ENCODE measurements at regions of chr6 and their contacts with region 1.

Region 1: DNA sequence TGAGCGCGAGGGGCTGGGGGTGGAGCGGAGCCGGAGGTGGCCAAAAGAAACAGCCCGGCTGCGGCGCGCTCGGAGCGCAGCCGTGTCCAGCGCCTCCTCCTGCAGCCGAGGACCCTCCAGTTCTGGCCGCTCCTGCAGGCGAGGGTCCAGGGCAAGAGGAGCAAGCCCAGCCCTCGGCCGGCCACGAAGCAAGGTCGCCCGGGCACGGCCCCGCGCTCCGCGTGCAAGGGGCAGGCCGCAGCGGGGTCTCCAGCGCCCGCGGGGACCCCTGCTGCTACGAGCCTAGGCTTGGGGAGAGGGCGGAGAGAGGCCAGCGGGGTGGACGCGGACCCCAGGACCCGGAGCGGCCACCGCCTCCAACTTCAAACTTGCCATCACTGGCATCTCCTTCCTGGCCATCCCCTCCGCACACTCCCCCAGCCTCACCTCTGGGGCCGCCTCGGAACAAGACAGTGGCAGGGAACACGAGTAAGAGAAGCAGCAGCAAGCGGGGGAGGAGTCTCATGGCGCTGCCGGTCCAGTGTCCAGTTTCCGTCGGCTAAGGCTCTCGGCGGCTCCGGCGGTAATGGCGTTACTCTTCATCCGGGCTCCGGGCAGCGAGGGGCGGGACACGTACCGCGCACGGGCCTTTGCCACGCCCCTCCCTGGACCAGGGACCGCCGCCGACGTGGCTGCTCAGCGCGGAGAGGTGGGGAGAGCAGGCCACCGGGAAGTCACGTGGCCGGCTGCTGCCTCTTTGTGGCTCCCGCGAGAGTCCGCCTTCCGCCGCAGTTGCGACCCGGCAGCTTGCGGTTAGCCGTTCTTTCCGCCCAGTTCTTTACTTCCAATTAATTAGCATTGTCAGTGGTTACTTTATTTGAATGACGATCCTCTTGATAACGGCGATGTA is at the start of gene SSR1:
- DNase-seq: peak; percentile 95
- ATAC-seq: peak; percentile 93
- H3K4me3 ChIP-seq: peak within 1 kb of the TSS; percentile 85 to 98 (median 97)
- H3K27ac ChIP-seq: peak within 1 kb of the TSS; percentile 91
- H3K4me1 ChIP-seq: peaks cover 69% of the 10 kb centered on the region
- H3K27me3 ChIP-seq: no peaks in the 10 kb centered on the region; a peak in 1 of 5 replicates
- CTCF ChIP-seq: no peak
- EP300 ChIP-seq: peak in 1 of 2 experiments; percentile 67; a peak in 2 of 4 replicates
- POLR2A ChIP-seq: peak; percentile 97 to 98
- RAD21 ChIP-seq: peak; percentile 54
- total RNA-seq, gene SSR1: 208 and 243 TPM in 2 replicates

Region 2: GRCh38 chr6:7042056-7042653 is 270.7 kb before region 1 on chr6:
- CTCF ChIA-PET with region 1: no interaction called
- POLR2A ChIA-PET with region 1: no interaction called
- in situ Hi-C with region 1: no loop called
- intact Hi-C with region 1: no loop called
- DNase-seq: peak; percentile 46
- ATAC-seq: peak; percentile 72
- H3K4me3 ChIP-seq: peak overlapping the region; percentile 17 to 58 (median 39)
- H3K27ac ChIP-seq: peak overlapping the region; percentile 81
- H3K4me1 ChIP-seq: peaks cover 25% of the 10 kb centered on the region
- H3K27me3 ChIP-seq: peaks cover 0 to 2% of the 10 kb centered on the region in 2 experiments; a peak in 1 of 5 replicates
- CTCF ChIP-seq: peak; percentile 16; the same call in 1 of the 2 replicates
- EP300 ChIP-seq: no peak; a peak in 1 of 4 replicates
- POLR2A ChIP-seq: no peak
- RAD21 ChIP-seq: no peak

Region 3: DNA sequence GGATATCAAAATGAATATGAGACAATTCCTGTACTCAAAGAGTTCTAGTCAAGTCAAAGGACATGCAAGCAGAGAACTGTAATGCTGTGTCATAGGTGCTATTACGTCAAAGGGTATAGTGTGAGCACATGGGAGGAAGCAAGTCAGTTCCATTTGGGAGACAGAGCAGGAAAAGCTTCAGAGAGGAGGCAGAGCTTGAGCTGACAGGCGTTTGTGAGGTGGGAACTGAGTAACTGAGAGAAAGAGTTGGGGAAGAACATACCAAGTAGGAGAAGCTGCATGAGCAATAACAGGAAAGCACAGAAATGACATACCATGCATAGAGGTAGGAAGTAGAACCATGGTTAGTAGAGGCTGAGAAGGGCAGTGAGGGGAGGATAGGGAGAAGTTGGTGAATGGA is 15.4 kb after region 1 on chr6:
- CTCF ChIA-PET with region 1: no interaction called
- POLR2A ChIA-PET with region 1: interaction called, 12 read pairs
- in situ Hi-C with region 1: no loop called
- intact Hi-C with region 1: no loop called
- DNase-seq: no peak
- ATAC-seq: no peak
- H3K4me3 ChIP-seq: no peak overlapping the region
- H3K27ac ChIP-seq: no peak overlapping the region
- H3K4me1 ChIP-seq: peaks cover 26% of the 10 kb centered on the region
- H3K27me3 ChIP-seq: no peaks in the 10 kb centered on the region
- CTCF ChIP-seq: no peak
- EP300 ChIP-seq: no peak
- POLR2A ChIP-seq: no peak
- RAD21 ChIP-seq: no peak

Region 4: DNA sequence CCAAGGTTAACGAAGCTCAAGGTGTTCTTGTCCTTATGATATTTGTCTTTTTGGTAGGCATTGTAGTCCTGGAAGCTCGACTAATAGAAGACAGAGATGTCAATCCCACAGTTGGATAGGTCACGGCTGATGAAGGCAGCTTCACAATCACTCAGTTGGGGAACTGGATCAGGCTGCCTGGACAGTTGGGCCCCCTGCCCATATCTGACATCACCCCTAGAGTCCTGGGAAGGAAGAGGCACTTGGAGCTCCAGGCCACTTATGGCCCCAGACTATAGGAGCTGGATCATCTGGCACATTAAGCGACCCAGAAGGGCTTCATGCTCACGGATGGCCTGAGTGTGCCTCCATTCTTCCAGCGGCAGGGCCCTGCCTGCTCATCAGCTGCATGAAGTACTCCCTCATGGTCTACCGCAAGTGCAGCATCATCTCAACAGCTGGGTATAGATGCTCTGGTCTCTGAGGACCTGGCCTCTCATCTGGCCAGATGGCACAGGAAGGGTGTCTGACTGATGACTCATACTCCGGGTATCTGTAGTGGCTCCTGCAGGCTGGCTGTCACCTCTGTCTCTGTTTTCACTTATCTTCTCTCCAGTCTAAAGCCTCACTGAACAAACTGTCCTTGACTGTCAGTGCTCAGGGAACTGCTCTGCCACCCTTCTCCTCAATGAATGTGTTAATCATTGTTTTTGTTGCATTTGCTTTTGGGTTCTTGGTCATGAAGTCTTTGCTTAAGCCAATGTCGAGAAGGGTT is 29.3 kb after region 1 on chr6:
- CTCF ChIA-PET with region 1: interaction called, 5 read pairs
- POLR2A ChIA-PET with region 1: interaction called, 3 read pairs
- in situ Hi-C with region 1: no loop called
- intact Hi-C with region 1: loop called (anchors 2 kb)
- DNase-seq: peak; percentile 91
- ATAC-seq: peak; percentile 93
- H3K4me3 ChIP-seq: no peak overlapping the region
- H3K27ac ChIP-seq: no peak overlapping the region
- H3K4me1 ChIP-seq: peaks cover 37% of the 10 kb centered on the region
- H3K27me3 ChIP-seq: no peaks in the 10 kb centered on the region; a peak in 1 of 5 replicates
- CTCF ChIP-seq: no peak; the same call in 1 of the 2 replicates
- EP300 ChIP-seq: peak in 1 of 2 experiments; percentile 46; a peak in 1 of 4 replicates
- POLR2A ChIP-seq: no peak
- RAD21 ChIP-seq: no peak

Region 5: GRCh38 chr6:7424967-7425807 is 112.3 kb after region 1 on chr6:
- CTCF ChIA-PET with region 1: no interaction called
- POLR2A ChIA-PET with region 1: no interaction called
- in situ Hi-C with region 1: no loop called
- intact Hi-C with region 1: no loop called
- DNase-seq: peak; percentile 79
- ATAC-seq: peak; percentile 85
- H3K4me3 ChIP-seq: no peak overlapping the region
- H3K27ac ChIP-seq: no peak overlapping the region
- H3K4me1 ChIP-seq: peaks cover 24% of the 10 kb centered on the region
- H3K27me3 ChIP-seq: no peaks in the 10 kb centered on the region
- CTCF ChIP-seq: peak; percentile 87
- EP300 ChIP-seq: no peak
- POLR2A ChIP-seq: no peak
- RAD21 ChIP-seq: peak; percentile 84